ENCODE measurements at regions of chr7 and their contacts with region 1.

Region 1: DNA sequence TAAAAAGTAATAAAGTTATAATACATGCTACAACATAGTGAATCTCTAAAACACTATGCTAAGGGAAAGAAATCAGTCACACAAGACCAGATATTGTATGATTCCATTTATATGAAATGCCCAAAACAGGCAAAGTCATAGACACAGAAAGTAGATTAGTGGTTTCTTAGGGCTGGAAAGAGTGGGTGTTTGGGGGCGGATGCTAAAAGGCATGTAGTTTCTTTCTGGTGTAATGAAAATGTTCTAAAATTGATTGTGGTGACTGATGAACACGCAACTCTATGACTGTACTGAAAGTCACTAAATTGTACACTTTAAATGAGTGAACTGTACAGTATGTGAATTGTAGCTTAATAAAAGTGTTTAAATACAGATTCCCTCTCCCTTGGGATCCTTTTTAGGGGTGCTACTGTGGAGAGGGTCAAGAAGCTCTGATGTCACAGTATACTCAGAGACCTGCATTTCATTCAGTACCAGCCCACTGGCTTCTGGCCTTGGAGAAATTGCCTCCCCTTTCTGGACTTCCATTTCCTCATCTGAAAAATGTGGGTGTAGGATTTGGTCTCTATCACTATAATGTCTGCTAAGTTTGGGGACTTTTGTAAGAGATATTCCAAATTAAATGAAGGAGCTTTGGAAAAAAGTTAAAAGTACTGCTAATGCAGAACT is 46.4 kb downstream of the AOAH start:
- DNase-seq: peak; percentile 86
- ATAC-seq: peak; percentile 91
- H3K4me3 Mint-ChIP-seq: peak overlapping the region; percentile 51
- H3K27ac Mint-ChIP-seq: peak overlapping the region; percentile 94
- H3K4me1 Mint-ChIP-seq: peaks cover 73% of the 10 kb centered on the region
- H3K27me3 Mint-ChIP-seq: no peaks in the 10 kb centered on the region

Region 2: DNA sequence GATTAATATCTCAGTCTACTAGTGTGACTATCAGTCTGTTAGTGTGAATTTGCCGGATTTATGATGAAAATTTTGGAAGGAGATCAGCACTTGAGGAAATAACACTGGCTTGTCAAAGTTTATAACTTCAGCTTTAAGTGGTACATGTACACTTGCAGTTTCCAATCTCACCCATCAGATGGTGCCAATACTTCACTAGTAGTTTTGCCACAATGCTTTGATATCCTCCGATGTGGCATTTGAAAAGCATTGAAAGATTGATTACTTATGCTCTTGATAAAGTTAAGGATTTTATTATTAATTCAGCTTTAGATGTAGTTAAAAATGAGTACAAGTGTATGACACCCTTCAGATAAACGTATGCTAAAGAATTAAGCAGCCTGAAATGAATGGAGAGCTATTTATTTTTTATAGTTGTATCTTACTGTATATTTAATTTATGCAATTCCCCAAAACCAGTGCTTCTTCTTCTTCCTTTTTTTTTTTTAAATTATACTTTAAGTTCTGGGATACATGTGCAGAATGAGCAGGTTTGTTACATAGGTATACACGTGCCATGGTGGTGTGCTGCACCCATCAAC is 190.1 kb before region 1 on chr7:
- CTCF ChIA-PET with region 1: interaction called, 11 read pairs
- POLR2A ChIA-PET with region 1: no interaction called
- intact Hi-C with region 1: no loop called
- DNase-seq: peak; percentile 23
- ATAC-seq: peak; percentile 55
- H3K4me3 Mint-ChIP-seq: no peak overlapping the region
- H3K27ac Mint-ChIP-seq: no peak overlapping the region
- H3K4me1 Mint-ChIP-seq: peaks cover 2% of the 10 kb centered on the region
- H3K27me3 Mint-ChIP-seq: peaks cover 4% of the 10 kb centered on the region

Region 3: GRCh38 chr7:36692456-36692855 is 14.6 kb after region 1 on chr7:
- CTCF ChIA-PET with region 1: interaction called, 9 read pairs
- POLR2A ChIA-PET with region 1: interaction called, 3 read pairs
- intact Hi-C with region 1: loop called in 1 of 2 experiments (anchors 2 kb)
- DNase-seq: peak; percentile 52
- ATAC-seq: peak; percentile 90
- H3K4me3 Mint-ChIP-seq: peak overlapping the region; percentile 60
- H3K27ac Mint-ChIP-seq: peak overlapping the region; percentile 92
- H3K4me1 Mint-ChIP-seq: peaks cover 55% of the 10 kb centered on the region
- H3K27me3 Mint-ChIP-seq: no peaks in the 10 kb centered on the region

Region 4: GRCh38 chr7:36723951-36724664 is 46.2 kb after region 1 on chr7 and contains the start of gene AOAH:
- CTCF ChIA-PET with region 1: interaction called, 7 read pairs
- POLR2A ChIA-PET with region 1: interaction called, 3 read pairs
- intact Hi-C with region 1: loop called (anchors 1 to 2 kb)
- DNase-seq: peak; percentile 88
- ATAC-seq: peak; percentile 79
- H3K4me3 Mint-ChIP-seq: peak within 1 kb of the TSS; percentile 79
- H3K27ac Mint-ChIP-seq: peak within 1 kb of the TSS; percentile 93
- H3K4me1 Mint-ChIP-seq: peaks cover 84% of the 10 kb centered on the region
- H3K27me3 Mint-ChIP-seq: no peaks in the 10 kb centered on the region
- total RNA-seq, gene AOAH: 9.2 to 10.0 TPM

Region 5: GRCh38 chr7:36852017-36852416 is 174.1 kb after region 1 on chr7:
- CTCF ChIA-PET with region 1: interaction called, 3 read pairs
- POLR2A ChIA-PET with region 1: no interaction called
- intact Hi-C with region 1: loop called (anchors 5 kb)
- DNase-seq: peak; percentile 52
- ATAC-seq: peak; percentile 87
- H3K4me3 Mint-ChIP-seq: no peak overlapping the region
- H3K27ac Mint-ChIP-seq: peak overlapping the region; percentile 82
- H3K4me1 Mint-ChIP-seq: peaks cover 22% of the 10 kb centered on the region
- H3K27me3 Mint-ChIP-seq: no peaks in the 10 kb centered on the region

Region 6: DNA sequence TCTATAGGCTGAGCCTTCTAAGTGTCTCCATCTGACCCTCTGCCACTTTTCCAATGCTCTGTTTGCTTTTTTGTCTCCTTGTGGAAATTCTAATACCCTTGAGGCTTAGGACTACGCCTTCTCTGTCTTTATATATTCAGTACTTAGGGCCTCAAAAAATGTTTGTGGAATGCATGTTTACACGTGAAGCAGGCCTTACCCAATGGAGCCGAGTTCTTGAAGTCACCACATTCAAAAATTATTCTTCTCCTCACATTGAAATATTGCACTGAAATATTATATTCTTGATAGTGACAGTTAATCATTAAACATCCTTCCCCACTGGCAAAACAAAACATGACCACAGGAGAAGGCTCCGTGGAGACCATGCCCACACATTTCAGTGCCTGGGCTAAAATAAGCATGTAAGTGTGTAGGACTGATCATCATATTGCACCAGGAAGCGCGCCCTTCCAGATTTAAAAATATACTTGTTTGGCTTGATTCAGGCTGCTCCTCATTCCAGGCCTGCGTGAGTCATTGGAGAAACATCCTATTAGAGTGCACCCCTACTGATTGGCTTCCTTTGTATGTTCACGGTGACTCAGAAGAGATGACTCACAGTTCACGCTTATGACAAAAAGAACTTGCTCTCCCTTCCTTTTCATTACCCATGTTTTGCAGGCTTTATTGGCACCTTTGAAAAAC is 353.8 kb after region 1 on chr7:
- CTCF ChIA-PET with region 1: interaction called, 3 read pairs
- POLR2A ChIA-PET with region 1: no interaction called
- intact Hi-C with region 1: loop called (anchors 2 to 5 kb)
- DNase-seq: peak; percentile 73
- ATAC-seq: peak; percentile 90
- H3K4me3 Mint-ChIP-seq: no peak overlapping the region
- H3K27ac Mint-ChIP-seq: peak overlapping the region; percentile 52
- H3K4me1 Mint-ChIP-seq: peaks cover 77% of the 10 kb centered on the region
- H3K27me3 Mint-ChIP-seq: no peaks in the 10 kb centered on the region

Region 7: GRCh38 chr7:37201003-37201875 is 523.3 kb after region 1 on chr7:
- CTCF ChIA-PET with region 1: no interaction called
- POLR2A ChIA-PET with region 1: no interaction called
- intact Hi-C with region 1: loop called in 1 of 2 experiments (anchors 5 kb)
- DNase-seq: peak; percentile 73
- ATAC-seq: no peak
- H3K4me3 Mint-ChIP-seq: no peak overlapping the region
- H3K27ac Mint-ChIP-seq: no peak overlapping the region
- H3K4me1 Mint-ChIP-seq: peaks cover 7% of the 10 kb centered on the region
- H3K27me3 Mint-ChIP-seq: no peaks in the 10 kb centered on the region

Region 8: GRCh38 chr7:37491919-37492685 is 814.2 kb after region 1 on chr7:
- CTCF ChIA-PET with region 1: no interaction called
- POLR2A ChIA-PET with region 1: no interaction called
- intact Hi-C with region 1: no loop called
- DNase-seq: no peak
- ATAC-seq: no peak
- H3K4me3 Mint-ChIP-seq: no peak overlapping the region
- H3K27ac Mint-ChIP-seq: no peak overlapping the region
- H3K4me1 Mint-ChIP-seq: peaks cover 8% of the 10 kb centered on the region
- H3K27me3 Mint-ChIP-seq: no peaks in the 10 kb centered on the region

Measured in activated CD4-positive, alpha-beta T cell treated with anti-CD3 and anti-CD28 coated beads for 36 hours (primary cell).